Caco-2 (cell line): ENCODE measurements at regions of chr7 and their contacts with region 1.

Region 1: GRCh38 chr7:24572997-24573625 is at the start of gene PALS2:
- DNase-seq: peak; percentile 75 to 81
- H3K4me3 ChIP-seq: peak within 1 kb of the TSS; percentile 81
- H3K4me3 Mint-ChIP-seq: peak within 1 kb of the TSS; percentile 98
- H3K27ac Mint-ChIP-seq: peak within 1 kb of the TSS; percentile 69
- H3K4me1 ChIP-seq: peaks cover 31% of the 10 kb centered on the region
- H3K4me1 Mint-ChIP-seq: peaks cover 37% of the 10 kb centered on the region
- H3K27me3 ChIP-seq: no peaks in the 10 kb centered on the region
- H3K27me3 Mint-ChIP-seq: peaks cover 11% of the 10 kb centered on the region
- CTCF ChIP-seq: no peak
- total RNA-seq, gene PALS2: 37.2 and 38.5 TPM in 2 replicates

Region 2: GRCh38 chr7:24290004-24290641 is 283.0 kb before region 1 on chr7:
- CTCF ChIA-PET with region 1: no interaction called
- POLR2A ChIA-PET with region 1: no interaction called
- intact Hi-C with region 1: loop called (anchors 2 kb)
- DNase-seq: peak; percentile 62 to 66
- H3K4me3 ChIP-seq: no peak overlapping the region
- H3K4me3 Mint-ChIP-seq: no peak overlapping the region
- H3K27ac Mint-ChIP-seq: no peak overlapping the region
- H3K4me1 ChIP-seq: no peaks in the 10 kb centered on the region
- H3K4me1 Mint-ChIP-seq: peaks cover 8% of the 10 kb centered on the region
- H3K27me3 ChIP-seq: no peaks in the 10 kb centered on the region; the same call in 1 of the 2 replicates
- H3K27me3 Mint-ChIP-seq: peaks cover 17% of the 10 kb centered on the region
- CTCF ChIP-seq: peak; percentile 60 to 68

Region 3: GRCh38 chr7:24401628-24402593 is 171.2 kb before region 1 on chr7:
- CTCF ChIA-PET with region 1: no interaction called
- POLR2A ChIA-PET with region 1: no interaction called
- intact Hi-C with region 1: loop called (anchors 5 kb)
- DNase-seq: peak in 1 of 2 experiments; percentile 20
- H3K4me3 ChIP-seq: no peak overlapping the region
- H3K4me3 Mint-ChIP-seq: no peak overlapping the region
- H3K27ac Mint-ChIP-seq: no peak overlapping the region
- H3K4me1 ChIP-seq: peaks cover 11% of the 10 kb centered on the region; the same call in 1 of the 2 replicates
- H3K4me1 Mint-ChIP-seq: peaks cover 6% of the 10 kb centered on the region
- H3K27me3 ChIP-seq: no peaks in the 10 kb centered on the region
- H3K27me3 Mint-ChIP-seq: no peaks in the 10 kb centered on the region
- CTCF ChIP-seq: peak; percentile 32 to 37

Region 4: DNA sequence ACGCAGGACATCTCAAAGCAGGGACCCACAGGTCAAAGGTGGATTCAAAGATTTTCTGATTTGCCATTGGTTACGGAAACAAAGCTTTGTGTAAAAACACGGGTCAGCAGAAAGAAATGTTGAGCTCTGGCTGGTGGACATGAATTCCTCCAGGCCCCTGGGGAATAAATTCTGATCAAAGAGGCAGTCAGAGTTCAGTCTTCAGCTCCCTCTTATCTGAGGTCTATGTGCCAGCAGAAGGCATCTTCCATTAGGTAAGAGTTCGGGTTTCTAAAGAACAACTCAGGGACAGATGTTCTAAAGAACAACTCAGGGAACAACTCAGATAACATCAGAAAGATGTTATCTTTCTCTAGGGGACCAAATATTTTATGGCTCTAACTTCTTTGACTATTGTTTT is 64.8 kb before region 1 on chr7:
- CTCF ChIA-PET with region 1: interaction called, 3 read pairs
- POLR2A ChIA-PET with region 1: no interaction called
- intact Hi-C with region 1: loop called (anchors 2 kb)
- DNase-seq: peak; percentile 77 to 84
- H3K4me3 ChIP-seq: no peak overlapping the region
- H3K4me3 Mint-ChIP-seq: peak overlapping the region; percentile 22
- H3K27ac Mint-ChIP-seq: peak overlapping the region; percentile 43
- H3K4me1 ChIP-seq: peaks cover 52% of the 10 kb centered on the region
- H3K4me1 Mint-ChIP-seq: peaks cover 47% of the 10 kb centered on the region
- H3K27me3 ChIP-seq: no peaks in the 10 kb centered on the region
- H3K27me3 Mint-ChIP-seq: no peaks in the 10 kb centered on the region
- CTCF ChIP-seq: no peak